ENCODE measurements at regions of chr11 and their contacts with region 1.

Region 1: DNA sequence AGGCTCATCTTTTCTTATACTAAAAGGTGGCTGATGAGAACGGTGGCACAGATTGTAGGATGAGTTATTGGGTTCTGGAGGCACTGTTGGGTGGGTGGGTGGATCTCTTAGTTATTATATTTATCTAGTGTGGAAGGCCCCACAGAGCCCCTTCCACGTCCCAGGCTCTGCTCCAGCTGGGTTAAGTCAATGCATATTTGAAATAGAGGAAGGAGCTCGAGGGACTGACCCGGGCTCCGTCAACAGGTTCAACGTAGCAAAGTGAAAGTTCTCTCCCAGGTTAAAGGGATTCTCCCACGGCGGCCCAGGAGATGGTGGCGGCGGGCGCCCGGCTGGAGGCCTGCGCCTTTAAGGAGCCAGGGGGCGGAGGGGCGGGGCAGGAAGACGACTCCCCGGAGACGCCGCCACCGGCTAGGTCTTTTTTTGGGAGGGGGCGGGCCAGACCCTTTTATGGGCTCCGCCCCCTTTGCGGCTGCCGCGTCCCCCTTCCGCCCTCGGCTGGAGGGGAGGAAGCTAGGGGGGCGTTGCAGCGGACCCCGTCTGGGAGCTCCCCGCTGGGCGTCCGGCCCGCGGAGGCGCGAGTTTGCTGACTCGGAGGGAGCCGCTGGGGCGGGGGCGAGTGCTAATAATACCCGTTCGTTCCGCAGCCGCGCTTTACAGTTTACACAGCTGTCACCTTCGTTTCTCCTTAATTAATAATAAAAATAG is 1.5 kb upstream of the INPPL1 start:
- DNase-seq: peak; percentile 97
- H3K4me3 ChIP-seq: peak overlapping the region; percentile 79
- H3K27ac ChIP-seq: peak overlapping the region; percentile 78
- H3K4me1 ChIP-seq: peaks cover 10% of the 10 kb centered on the region
- H3K27me3 ChIP-seq: no peaks in the 10 kb centered on the region
- CTCF ChIP-seq: no peak

Region 2: GRCh38 chr11:72112321-72113219 is 110.5 kb before region 1 on chr11 and contains the start of gene ANAPC15:
- CTCF ChIA-PET with region 1: no interaction called
- POLR2A ChIA-PET with region 1: no interaction called
- intact Hi-C with region 1: loop called (anchors 5 kb)
- DNase-seq: peak; percentile 100
- H3K4me3 ChIP-seq: peak within 1 kb of the TSS; percentile 56
- H3K27ac ChIP-seq: peak within 1 kb of the TSS; percentile 99
- H3K4me1 ChIP-seq: peaks cover 10% of the 10 kb centered on the region
- H3K27me3 ChIP-seq: no peaks in the 10 kb centered on the region
- CTCF ChIP-seq: no peak
- total RNA-seq, gene ANAPC15: 57.2 and 58.9 TPM in 2 replicates

Region 3: DNA sequence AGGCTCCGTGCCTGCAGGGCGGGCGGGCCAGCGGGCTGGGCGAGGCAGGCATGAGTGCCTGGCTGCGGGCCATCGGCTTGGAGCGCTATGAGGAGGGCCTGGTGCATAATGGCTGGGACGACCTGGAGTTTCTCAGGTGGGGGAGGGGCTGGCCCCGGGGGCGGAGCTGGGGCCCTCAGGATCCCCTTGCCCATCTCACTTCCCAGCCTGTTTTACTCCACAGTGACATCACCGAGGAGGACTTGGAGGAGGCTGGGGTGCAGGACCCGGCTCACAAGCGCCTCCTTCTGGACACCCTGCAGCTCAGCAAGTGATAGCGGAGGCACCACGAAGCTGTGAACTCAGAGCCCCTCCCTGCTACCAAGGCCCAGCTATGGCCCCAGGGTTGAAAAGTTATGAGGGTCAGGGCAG is 15.0 kb after region 1 on chr11:
- CTCF ChIA-PET with region 1: interaction called, 3 read pairs
- POLR2A ChIA-PET with region 1: interaction called, 19 read pairs
- intact Hi-C with region 1: no loop called
- DNase-seq: peak; percentile 80
- H3K4me3 ChIP-seq: no peak overlapping the region
- H3K27ac ChIP-seq: no peak overlapping the region
- H3K4me1 ChIP-seq: no peaks in the 10 kb centered on the region
- H3K27me3 ChIP-seq: peaks cover 40% of the 10 kb centered on the region
- CTCF ChIP-seq: peak; percentile 94